Activated CD4-positive, alpha-beta T cell treated with anti-CD3 and anti-CD28 coated beads, Interleukin-2, amount 10 ng/mL, durations not matched to agents 24 days and 14 days (primary cell): ENCODE measurements at regions of chr22 and their contacts with region 1.

Region 1: DNA sequence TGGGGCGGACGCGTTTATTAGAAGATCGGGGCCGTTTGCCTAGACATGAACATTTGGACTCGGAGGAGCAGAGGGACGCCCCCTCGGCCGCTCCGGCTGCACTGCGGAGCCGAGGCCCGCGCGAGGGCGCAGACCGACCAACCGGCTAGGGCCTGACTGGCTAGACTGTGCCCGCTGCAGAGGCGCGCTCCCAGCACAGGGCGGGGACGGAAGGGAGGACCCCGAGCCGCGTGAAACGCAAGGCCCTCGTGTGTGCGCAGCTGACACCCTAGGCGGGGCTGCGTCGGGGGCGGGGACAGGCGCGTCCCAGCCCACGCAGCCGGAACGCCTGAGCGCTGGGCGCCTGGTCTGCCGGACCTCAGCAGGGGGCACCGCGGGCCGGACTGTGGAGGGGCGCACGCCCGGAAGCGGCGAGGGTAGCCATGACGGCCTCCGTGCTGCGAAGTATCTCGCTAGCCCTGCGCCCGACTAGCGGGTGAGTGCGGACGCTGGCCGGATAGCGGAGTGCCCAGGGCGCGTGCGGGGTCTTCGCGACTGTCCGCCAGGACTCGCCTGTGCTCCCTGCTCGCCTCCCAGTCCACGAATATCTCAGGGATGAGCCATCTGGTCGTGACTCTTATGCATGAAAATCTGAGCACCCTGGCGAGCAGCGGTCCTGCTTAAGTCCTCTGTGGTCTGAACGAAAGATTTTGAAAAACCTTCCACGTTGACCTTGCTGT is at the start of gene MRPL40:
- DNase-seq: peak; percentile 97
- H3K4me3 Mint-ChIP-seq: peak within 1 kb of the TSS; percentile 92
- H3K27ac Mint-ChIP-seq: peak within 1 kb of the TSS; percentile 96
- H3K4me1 Mint-ChIP-seq: peaks cover 33% of the 10 kb centered on the region
- H3K27me3 Mint-ChIP-seq: no peaks in the 10 kb centered on the region
- total RNA-seq, gene MRPL40: 35.2 and 37.6 TPM in 2 replicates

Region 2: GRCh38 chr22:19178656-19179496 is 253.4 kb before region 1 on chr22 and contains the start of gene SLC25A1:
- intact Hi-C with region 1: loop called (anchors 5 kb)
- DNase-seq: peak; percentile 97
- H3K4me3 Mint-ChIP-seq: peak within 1 kb of the TSS; percentile 83
- H3K27ac Mint-ChIP-seq: peak within 1 kb of the TSS; percentile 70
- H3K4me1 Mint-ChIP-seq: peaks cover 23% of the 10 kb centered on the region
- H3K27me3 Mint-ChIP-seq: no peaks in the 10 kb centered on the region
- total RNA-seq, gene SLC25A1: 39.4 and 41.2 TPM in 2 replicates

Region 3: DNA sequence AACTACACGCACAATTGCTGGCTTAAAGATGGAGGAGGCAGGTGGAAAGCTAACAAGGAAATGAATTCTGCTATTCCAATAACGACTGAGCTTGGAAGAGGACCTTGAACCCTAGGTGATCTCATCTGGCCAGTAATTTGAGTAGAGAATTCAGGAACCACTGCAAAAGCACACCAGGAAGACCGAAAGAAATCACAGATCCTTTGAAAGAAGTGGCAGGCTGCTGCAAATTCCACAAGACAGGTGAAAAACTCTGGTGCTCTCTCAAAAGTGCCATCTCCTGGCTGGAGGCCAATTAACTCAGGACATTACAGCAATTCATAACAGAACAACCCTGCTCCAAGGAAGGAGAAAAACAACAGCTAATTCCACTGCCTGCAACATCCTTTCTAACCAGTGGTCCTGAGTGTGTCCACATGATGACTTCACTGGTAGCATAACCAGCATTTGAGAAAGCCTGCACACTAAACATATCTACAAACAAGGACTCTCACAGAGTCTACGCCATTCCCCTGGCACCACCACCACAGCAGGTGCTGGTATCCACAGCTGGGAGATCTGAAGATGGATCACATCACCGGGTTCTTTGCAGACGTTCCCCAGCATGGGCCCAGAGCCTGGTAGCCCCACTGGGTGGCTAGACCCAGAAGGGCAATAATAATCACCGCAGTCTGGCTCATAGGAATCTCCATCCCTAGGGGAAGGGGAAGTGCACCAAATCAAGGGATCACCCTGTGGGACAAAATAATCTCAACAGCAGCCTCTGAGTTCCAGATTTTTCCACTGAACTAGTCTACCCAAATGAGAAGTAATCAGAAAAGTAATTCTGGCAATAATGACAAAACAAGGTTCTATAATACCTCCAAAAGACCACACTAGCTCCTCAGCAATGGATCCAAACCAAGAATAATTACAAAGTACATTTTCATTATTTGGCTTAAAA is 95.9 kb before region 1 on chr22:
- intact Hi-C with region 1: no loop called
- DNase-seq: no peak
- H3K4me3 Mint-ChIP-seq: no peak overlapping the region
- H3K27ac Mint-ChIP-seq: no peak overlapping the region
- H3K4me1 Mint-ChIP-seq: no peaks in the 10 kb centered on the region
- H3K27me3 Mint-ChIP-seq: no peaks in the 10 kb centered on the region

Region 4: DNA sequence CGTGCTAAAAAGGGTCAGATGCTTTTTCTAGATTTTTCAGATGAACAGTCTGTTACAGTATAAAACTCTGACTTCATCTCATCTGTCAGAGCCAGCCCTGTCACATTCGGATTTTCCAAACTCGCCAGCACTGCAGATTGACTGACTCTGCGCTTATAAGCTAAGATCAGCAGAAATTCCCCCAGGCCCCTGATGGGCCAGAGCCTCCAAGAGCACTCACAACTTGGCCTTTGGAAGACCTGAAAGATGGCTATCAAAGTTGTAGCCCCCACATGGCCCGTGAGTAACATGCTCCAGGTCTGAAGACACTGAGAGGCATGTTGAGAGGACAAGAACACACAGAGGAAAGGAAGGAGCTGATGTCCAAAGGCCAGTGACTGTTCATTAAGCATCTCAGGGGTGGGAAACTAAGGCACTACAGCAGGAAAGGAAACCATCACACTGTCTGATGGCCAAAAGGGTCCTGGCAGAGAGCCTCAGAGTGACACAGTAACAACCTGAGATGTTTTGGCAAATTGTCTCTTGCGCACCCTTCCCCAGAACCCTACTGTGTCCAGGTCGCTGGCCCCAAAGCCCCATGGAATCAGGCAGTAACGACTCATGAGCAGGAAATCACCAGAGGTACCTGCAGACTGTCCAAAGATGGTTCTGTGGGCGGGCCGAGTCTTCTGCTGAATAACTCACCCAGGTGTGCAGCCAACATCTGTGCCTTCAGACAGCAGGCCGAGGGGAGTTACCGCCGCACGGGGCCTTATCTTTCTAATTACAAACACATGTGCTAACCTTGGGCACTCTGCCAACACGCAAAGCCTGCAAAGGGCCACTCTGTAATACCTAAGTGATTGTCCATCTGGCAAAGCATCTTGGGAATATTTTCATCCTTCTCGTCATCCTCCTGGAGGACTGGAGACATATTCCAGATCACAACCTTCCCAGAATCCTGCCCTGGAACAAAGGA is 24.4 kb before region 1 on chr22:
- intact Hi-C with region 1: no loop called
- DNase-seq: no peak
- H3K4me3 Mint-ChIP-seq: no peak overlapping the region
- H3K27ac Mint-ChIP-seq: no peak overlapping the region
- H3K4me1 Mint-ChIP-seq: peaks cover 7% of the 10 kb centered on the region
- H3K27me3 Mint-ChIP-seq: no peaks in the 10 kb centered on the region

Region 5: DNA sequence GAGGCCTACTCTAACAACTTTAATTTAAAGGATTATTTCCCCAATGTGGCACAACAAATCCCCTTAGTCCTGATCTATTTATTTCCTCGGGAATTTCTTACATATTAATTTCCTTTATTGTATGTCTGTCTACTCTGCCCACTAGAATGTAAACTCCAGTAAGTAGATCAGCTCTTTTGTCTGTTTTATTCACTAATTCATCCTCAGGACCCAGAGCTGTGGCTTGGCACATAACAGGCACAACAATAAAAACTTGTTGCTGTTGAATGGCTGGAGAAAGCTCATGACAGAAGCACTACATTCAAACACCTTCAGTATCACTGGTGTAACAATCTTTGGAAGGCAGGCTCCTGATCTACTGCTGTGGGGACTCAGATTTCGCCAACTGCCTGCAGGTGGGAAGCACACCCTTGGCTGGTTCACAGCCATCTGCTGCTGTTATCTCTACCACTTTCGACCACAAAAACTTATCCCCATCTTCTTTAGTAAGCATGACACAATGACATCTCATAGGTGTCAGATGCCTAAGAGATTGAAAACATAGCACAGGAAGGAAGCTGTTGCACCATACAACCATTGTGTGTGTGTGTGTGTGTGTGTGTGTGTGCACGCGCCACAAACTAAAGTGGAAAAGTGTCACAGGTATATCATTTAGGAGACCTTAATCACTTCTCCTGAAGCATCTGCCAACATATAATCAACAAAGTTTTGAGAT is 12.7 kb before region 1 on chr22:
- intact Hi-C with region 1: loop called (anchors 1 kb)
- DNase-seq: peak; percentile 84
- H3K4me3 Mint-ChIP-seq: peak overlapping the region; percentile 52
- H3K27ac Mint-ChIP-seq: peak overlapping the region; percentile 83
- H3K4me1 Mint-ChIP-seq: peaks cover 57% of the 10 kb centered on the region
- H3K27me3 Mint-ChIP-seq: no peaks in the 10 kb centered on the region

Region 6: GRCh38 chr22:19479357-19480172 is 47.3 kb after region 1 on chr22 and contains the start of gene CDC45:
- intact Hi-C with region 1: loop called (anchors 1 kb)
- DNase-seq: peak; percentile 98
- H3K4me3 Mint-ChIP-seq: peak within 1 kb of the TSS; percentile 100
- H3K27ac Mint-ChIP-seq: peak within 1 kb of the TSS; percentile 98
- H3K4me1 Mint-ChIP-seq: peaks cover 37% of the 10 kb centered on the region
- H3K27me3 Mint-ChIP-seq: no peaks in the 10 kb centered on the region
- total RNA-seq, gene CDC45: 121 and 123 TPM in 2 replicates